WTC11 (cell line): ENCODE measurements at regions of chr18 and their contacts with region 1.

Region 1: GRCh38 chr18:7272311-7273049 is 41.6 kb downstream of the LRRC30 start:
- DNase-seq: peak; percentile 70
- ATAC-seq: peak; percentile 79
- H3K4me3 Mint-ChIP-seq: no peak overlapping the region
- H3K27ac Mint-ChIP-seq: no peak overlapping the region
- H3K4me1 Mint-ChIP-seq: 0 out of 2 replicates have a peak, but pooled peaks cover 3% of the 10 kb centered on the region
- H3K27me3 Mint-ChIP-seq: no peaks in the 10 kb centered on the region; the same call in 1 of the 2 replicates
- CTCF ChIP-seq: no peak

Region 2: DNA sequence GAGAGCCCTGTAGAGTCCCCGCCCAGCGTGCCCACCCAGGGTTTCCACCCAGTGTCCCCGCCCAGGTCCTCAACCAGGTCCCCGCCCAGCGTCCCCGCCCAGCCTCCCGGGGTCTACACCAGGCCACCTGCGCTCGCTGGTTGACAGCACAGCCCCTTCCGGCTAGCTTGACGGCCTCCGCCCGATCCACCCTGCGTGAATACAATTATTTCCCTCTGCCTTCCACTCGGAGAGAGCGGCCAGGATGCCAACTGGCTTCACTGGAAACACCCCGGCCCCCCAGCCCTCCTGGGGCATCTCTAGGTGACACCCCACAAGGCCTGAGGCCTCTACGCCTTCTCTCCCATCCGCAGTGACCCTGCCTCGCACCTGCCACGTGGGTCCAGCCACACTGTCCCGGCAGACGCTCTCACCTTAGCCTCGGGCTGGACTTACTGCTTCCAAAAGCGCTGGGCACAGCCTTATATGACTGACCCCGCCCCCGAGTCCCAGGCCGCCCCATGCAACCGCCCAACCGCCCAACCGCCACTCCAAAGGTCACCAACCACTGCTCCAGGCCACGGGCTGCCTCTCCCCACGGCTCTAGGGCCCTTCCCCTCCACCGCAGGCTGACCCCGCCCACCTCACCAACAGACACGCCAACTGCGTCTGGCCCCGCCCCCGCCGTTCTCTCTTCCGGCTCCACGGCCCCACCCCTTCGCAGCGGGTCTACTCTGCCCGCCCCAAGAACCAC is 342.9 kb before region 1 on chr18:
- CTCF ChIA-PET with region 1: no interaction called
- POLR2A ChIA-PET with region 1: no interaction called
- DNase-seq: peak; percentile 77
- ATAC-seq: peak; percentile 95
- H3K4me3 Mint-ChIP-seq: no peak overlapping the region
- H3K27ac Mint-ChIP-seq: no peak overlapping the region
- H3K4me1 Mint-ChIP-seq: no peaks in the 10 kb centered on the region
- H3K27me3 Mint-ChIP-seq: no peaks in the 10 kb centered on the region; the same call in 1 of the 2 replicates
- CTCF ChIP-seq: no peak

Region 3: DNA sequence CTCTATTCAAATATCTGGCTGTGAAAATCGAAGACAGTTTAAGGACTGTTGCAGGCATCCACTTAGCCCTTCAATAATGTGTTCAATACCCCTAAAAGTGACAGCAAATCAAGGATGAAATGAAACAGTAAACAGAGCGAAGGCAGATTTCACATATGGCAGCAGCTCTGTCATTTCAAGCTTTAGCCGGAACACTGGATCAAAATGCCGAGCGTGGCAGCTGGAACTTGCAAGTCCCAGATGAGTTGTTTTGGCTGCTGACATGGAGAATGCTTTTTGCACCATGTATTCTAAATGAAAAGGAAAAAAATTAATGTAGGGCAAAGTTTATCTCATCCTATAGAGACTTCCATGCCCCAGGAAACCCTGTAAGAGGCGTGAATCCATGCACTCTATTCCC is 23.6 kb before region 1 on chr18:
- CTCF ChIA-PET with region 1: no interaction called
- POLR2A ChIA-PET with region 1: no interaction called
- DNase-seq: no peak
- ATAC-seq: no peak
- H3K4me3 Mint-ChIP-seq: no peak overlapping the region
- H3K27ac Mint-ChIP-seq: no peak overlapping the region
- H3K4me1 Mint-ChIP-seq: 0 out of 2 replicates have a peak, but pooled peaks cover 6% of the 10 kb centered on the region
- H3K27me3 Mint-ChIP-seq: no peaks in the 10 kb centered on the region; the same call in 1 of the 2 replicates
- CTCF ChIP-seq: no peak

Region 4: GRCh38 chr18:7259475-7260081 is 12.9 kb before region 1 on chr18:
- CTCF ChIA-PET with region 1: interaction called, 16 read pairs
- POLR2A ChIA-PET with region 1: interaction called, 7 read pairs
- DNase-seq: no peak
- ATAC-seq: no peak
- H3K4me3 Mint-ChIP-seq: no peak overlapping the region
- H3K27ac Mint-ChIP-seq: no peak overlapping the region
- H3K4me1 Mint-ChIP-seq: no peaks in the 10 kb centered on the region
- H3K27me3 Mint-ChIP-seq: no peaks in the 10 kb centered on the region
- CTCF ChIP-seq: no peak

Region 5: DNA sequence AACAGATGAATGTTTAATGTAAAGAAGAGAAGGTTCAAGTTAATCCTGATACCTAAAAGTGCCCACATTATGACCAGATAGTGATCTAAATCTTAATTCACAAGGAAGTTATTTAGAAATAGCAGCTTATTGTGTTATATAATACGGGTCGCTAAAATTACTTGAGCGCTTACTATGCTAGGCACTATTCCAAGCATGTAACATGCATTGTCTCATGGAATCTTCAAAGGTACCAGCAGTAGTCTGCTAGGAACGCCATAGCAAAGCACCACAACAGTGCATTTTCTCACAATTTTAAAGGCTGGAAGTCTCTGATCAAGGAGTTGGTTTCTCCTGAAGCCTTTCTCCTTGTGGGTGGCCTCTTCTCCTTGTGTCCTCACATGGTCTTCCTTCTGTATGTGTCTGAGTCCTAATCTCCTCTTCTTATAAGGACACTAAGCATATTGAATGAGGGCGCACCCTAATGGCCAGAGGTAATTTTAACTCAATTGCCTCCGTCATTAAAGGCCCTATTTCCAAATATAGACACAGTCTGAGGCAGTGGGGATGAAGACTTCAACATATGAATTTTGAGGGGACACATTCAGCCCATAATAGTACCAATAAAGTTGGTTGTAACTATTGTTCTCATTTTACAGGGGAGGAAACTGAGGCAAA is 76.8 kb after region 1 on chr18:
- CTCF ChIA-PET with region 1: interaction called, 14 read pairs
- POLR2A ChIA-PET with region 1: no interaction called
- DNase-seq: no peak
- ATAC-seq: no peak
- H3K4me3 Mint-ChIP-seq: no peak overlapping the region
- H3K27ac Mint-ChIP-seq: no peak overlapping the region
- H3K4me1 Mint-ChIP-seq: no peaks in the 10 kb centered on the region
- H3K27me3 Mint-ChIP-seq: no peaks in the 10 kb centered on the region
- CTCF ChIP-seq: no peak

Region 6: DNA sequence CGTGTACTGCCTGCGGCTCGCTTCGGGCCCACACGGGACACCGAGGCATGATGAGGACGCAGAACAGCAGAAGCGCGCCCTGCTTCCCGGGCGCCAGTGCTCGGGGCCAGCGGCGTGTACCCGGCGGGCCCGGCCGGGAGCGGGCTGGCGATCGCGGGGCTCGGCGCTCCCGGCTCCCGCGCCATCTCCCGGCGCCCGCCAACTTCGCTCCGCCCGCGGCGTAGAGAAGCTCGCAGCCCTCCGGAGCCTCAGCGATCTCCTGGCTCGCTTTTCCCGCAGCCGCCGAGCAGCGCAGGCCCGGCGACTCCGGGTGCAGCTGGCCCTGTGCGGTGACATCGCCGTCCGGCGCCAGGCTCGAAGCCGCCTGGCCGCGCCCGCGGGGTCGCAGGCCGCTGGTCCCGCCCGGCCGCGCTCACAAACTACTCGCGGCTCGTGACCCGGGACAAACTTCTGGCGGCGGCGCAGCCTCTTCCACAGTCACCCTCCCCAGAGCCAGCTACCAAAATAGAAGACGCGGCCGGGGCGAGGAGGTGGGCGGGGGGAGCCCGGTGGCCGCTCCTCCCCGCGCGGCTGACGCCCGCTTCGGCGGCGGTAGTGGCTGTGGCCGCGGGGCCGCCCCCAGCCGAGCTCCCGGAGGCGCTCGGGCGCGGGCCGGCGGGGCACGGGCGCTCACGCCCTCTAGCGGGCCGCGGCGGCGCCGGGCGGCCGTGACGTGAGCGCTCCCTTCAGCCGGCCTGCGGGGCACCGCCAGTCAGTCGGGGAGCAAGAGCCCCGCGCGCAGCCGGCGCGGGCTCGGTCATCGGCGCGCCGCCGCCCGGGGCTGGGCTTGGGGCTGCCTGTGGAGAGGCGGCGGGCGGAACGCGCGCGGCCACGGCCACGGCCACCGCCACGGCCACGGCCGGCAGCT is 294.3 kb after region 1 on chr18 and contains the start of gene PTPRM:
- CTCF ChIA-PET with region 1: interaction called, 84 read pairs
- POLR2A ChIA-PET with region 1: interaction called, 4 read pairs
- DNase-seq: peak; percentile 67
- ATAC-seq: peak; percentile 81
- H3K4me3 Mint-ChIP-seq: peak within 1 kb of the TSS; percentile 71
- H3K27ac Mint-ChIP-seq: no peak within 1 kb of the TSS
- H3K4me1 Mint-ChIP-seq: peaks cover 14% of the 10 kb centered on the region
- H3K27me3 Mint-ChIP-seq: peaks cover 41% of the 10 kb centered on the region
- CTCF ChIP-seq: peak; percentile 18; the same call in 1 of the 2 replicates
- total RNA-seq, gene PTPRM: 8.6 to 11.1 TPM (median 9.2 TPM) in 3 replicates

Region 7: GRCh38 chr18:7696780-7697179 is 424.3 kb after region 1 on chr18:
- CTCF ChIA-PET with region 1: no interaction called
- POLR2A ChIA-PET with region 1: no interaction called
- DNase-seq: no peak
- ATAC-seq: no peak
- H3K4me3 Mint-ChIP-seq: no peak overlapping the region
- H3K27ac Mint-ChIP-seq: no peak overlapping the region
- H3K4me1 Mint-ChIP-seq: no peaks in the 10 kb centered on the region
- H3K27me3 Mint-ChIP-seq: no peaks in the 10 kb centered on the region; the same call in 1 of the 2 replicates
- CTCF ChIP-seq: no peak